ENCODE measurements at regions of chr6 and their contacts with region 1.

Region 1: GRCh38 chr6:3977875-3978711 is 100.8 kb downstream of the FAM217A start:
- DNase-seq: peak; percentile 10 to 78 (median 44)
- ATAC-seq: peak; percentile 99
- H3K4me3 ChIP-seq: peak overlapping the region in 1 of 2 experiments; percentile 6
- H3K4me3 Mint-ChIP-seq: peak overlapping the region; percentile 47
- H3K27ac ChIP-seq: no peak overlapping the region
- H3K27ac Mint-ChIP-seq: no peak overlapping the region
- H3K4me1 ChIP-seq: peaks cover 7% of the 10 kb centered on the region
- H3K4me1 Mint-ChIP-seq: peaks cover 11% of the 10 kb centered on the region
- H3K27me3 ChIP-seq: no peaks in the 10 kb centered on the region
- H3K27me3 Mint-ChIP-seq: no peaks in the 10 kb centered on the region
- CTCF ChIP-seq: peak; percentile 64

Region 2: GRCh38 chr6:3759646-3760232 is 218.4 kb before region 1 on chr6:
- CTCF ChIA-PET with region 1: interaction called, 10 read pairs
- POLR2A ChIA-PET with region 1: no interaction called
- intact Hi-C with region 1: no loop called
- DNase-seq: no peak
- ATAC-seq: no peak
- H3K4me3 ChIP-seq: no peak overlapping the region
- H3K4me3 Mint-ChIP-seq: no peak overlapping the region
- H3K27ac ChIP-seq: no peak overlapping the region
- H3K27ac Mint-ChIP-seq: no peak overlapping the region
- H3K4me1 ChIP-seq: no peaks in the 10 kb centered on the region
- H3K4me1 Mint-ChIP-seq: no peaks in the 10 kb centered on the region
- H3K27me3 ChIP-seq: no peaks in the 10 kb centered on the region
- H3K27me3 Mint-ChIP-seq: peaks cover 1% of the 10 kb centered on the region
- CTCF ChIP-seq: no peak

Region 3: DNA sequence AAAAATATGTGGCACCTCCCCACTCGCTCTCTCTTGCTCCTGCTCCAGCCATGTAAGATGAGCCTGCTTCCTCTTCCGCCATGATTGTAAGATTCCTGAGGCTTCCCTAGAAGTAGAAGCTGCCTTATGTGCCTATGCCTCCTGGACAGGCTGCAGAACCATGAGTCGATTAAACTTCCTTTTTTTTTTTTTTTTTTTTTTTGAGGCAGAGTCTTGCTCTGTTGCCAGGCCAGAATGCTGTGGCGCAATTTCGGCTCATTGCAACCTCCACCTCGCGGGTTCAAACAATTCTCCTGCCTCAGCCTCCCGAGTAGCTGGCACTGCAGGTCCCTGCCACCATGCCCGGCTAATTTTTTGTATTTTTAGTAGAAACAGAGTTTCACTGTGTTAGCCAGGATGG is 11.7 kb before region 1 on chr6:
- CTCF ChIA-PET with region 1: interaction called, 27 read pairs
- POLR2A ChIA-PET with region 1: no interaction called
- intact Hi-C with region 1: no loop called
- DNase-seq: no peak
- ATAC-seq: no peak
- H3K4me3 ChIP-seq: no peak overlapping the region
- H3K4me3 Mint-ChIP-seq: no peak overlapping the region
- H3K27ac ChIP-seq: no peak overlapping the region
- H3K27ac Mint-ChIP-seq: no peak overlapping the region
- H3K4me1 ChIP-seq: no peaks in the 10 kb centered on the region
- H3K4me1 Mint-ChIP-seq: no peaks in the 10 kb centered on the region
- H3K27me3 ChIP-seq: no peaks in the 10 kb centered on the region
- H3K27me3 Mint-ChIP-seq: peaks cover 3% of the 10 kb centered on the region
- CTCF ChIP-seq: no peak

Region 4: DNA sequence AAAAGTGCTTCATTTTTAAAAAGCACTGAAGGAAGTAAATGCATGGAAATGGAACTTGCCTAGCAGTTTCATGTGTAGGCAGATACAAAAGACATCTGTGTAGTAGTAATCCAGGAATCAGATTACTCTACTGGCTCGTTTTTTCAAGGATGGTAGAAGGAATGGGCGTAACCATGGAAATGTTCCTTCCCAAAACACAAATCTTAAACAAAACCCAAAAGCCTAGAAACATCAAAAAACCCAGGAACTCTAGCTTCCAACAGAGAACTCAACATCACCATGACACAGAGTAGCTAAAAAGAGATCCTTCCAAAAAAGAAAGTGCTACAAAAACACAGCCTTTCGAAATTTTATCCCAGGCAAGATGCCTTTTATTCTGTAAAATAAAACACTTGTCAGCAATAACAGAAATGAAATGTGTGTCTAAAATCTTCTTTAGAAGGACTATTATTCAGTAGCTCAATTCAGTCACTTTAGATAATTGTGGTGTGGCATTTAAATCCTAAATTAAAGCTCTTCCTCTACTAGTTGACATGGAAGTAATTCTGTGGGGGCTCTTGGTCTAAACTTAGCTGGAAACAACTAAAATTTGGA is 19.2 kb after region 1 on chr6:
- CTCF ChIA-PET with region 1: interaction called, 18 read pairs
- POLR2A ChIA-PET with region 1: no interaction called
- intact Hi-C with region 1: no loop called
- DNase-seq: no peak
- ATAC-seq: no peak
- H3K4me3 ChIP-seq: no peak overlapping the region
- H3K4me3 Mint-ChIP-seq: no peak overlapping the region
- H3K27ac ChIP-seq: no peak overlapping the region
- H3K27ac Mint-ChIP-seq: no peak overlapping the region
- H3K4me1 ChIP-seq: no peaks in the 10 kb centered on the region
- H3K4me1 Mint-ChIP-seq: peaks cover 35% of the 10 kb centered on the region
- H3K27me3 ChIP-seq: no peaks in the 10 kb centered on the region
- H3K27me3 Mint-ChIP-seq: no peaks in the 10 kb centered on the region
- CTCF ChIP-seq: no peak